Sigmoid colon (tissue), 7 donors: ENCODE measurements at regions of chr10 and their contacts with region 1.

Region 1: DNA sequence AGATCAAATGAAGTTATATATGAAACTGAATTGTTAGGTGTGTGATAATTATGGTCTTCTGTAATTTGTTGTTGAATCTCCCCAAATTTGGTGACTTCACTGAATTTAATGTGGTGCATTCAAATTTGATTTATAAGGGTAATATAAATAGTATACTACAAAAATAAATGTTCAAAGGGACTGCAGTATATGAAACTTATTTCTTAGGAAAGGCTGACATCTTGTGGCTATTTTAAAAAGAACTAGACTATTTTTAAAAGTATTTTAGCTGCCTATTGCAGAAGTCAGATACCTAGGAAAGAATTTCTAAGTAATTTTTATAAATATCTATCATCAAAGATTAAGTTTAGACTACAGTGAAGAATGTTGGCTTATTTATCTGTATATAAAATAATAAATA is 36.6 kb downstream of the ATRNL1 start:
- DNase-seq: no peak
- H3K4me3 ChIP-seq: no peak overlapping the region
- H3K27ac ChIP-seq: no peak overlapping the region
- H3K4me1 ChIP-seq: no peaks in the 10 kb centered on the region
- H3K27me3 ChIP-seq: no peaks in the 10 kb centered on the region
- CTCF ChIP-seq: peak in 2 of 4 experiments; percentile 13 to 18
- EP300 ChIP-seq: no peak
- POLR2A ChIP-seq: no peak

Region 2: DNA sequence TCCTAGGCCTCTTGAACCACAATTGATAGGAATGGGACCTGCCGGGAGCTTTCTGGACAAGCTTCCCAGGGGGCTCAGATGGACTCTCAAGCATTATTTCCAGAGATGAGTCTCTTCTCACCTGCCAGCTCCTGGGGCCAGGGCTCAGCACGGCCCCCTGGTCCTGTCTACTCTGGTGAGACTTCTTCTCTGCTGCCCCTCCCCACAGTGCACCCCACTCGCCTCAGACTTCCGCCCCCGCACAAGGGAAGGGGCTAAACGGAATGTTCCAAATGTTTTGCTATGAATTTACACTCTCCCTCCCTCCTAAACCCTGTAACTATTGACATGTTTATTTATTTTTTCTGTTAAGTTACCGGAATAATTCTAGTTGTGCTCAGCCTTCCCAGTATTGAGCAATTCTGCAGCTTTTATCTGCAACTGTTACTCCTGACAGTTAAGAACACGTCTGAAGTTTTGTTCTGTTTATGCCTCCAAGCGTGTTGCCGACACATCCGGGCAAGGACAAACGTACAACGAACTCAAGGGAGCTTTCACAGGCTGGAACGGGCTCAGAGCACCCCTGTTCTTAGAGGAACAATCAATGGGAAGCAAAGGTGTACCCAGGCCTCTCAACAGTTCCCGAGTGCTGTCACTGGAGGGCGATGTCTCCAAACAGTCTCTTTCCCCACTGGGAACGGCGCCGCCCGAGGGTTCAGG is 253.0 kb before region 1 on chr10:
- intact Hi-C with region 1: loop called (anchors 2 kb)
- DNase-seq: peak; percentile 71
- H3K4me3 ChIP-seq: no peak overlapping the region
- H3K27ac ChIP-seq: no peak overlapping the region
- H3K4me1 ChIP-seq: peaks cover 0 to 13% (median 11%) of the 10 kb centered on the region in 4 donors
- H3K27me3 ChIP-seq: no peaks in the 10 kb centered on the region
- CTCF ChIP-seq: peak in 3 of 4 experiments; percentile 25 to 56 (median 37)
- EP300 ChIP-seq: no peak
- POLR2A ChIP-seq: no peak